Left ventricle myocardium superior (tissue), 1 donor: ENCODE measurements at regions of chr10 and their contacts with region 1.

Region 1: DNA sequence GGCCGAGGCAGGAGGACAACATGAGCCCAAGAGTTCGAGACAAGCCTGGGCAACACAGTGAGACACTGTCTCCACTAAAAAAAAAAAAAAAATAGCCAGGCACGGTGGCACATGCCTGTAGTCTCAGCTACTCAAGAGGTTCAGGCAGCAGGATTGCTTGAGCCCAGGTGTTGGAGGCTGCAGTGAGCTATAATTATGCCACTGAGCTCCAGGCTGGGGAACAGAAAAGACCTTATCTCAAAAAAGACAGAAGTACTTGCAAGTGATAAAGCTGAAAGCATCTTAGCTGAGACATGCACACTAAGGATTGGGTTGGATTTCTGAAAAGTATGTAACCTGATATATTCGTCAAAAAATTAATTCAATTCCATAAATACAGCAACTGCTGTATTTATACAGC is 68.4 kb downstream of the PPP1R3C start:
- DNase-seq: no peak
- ATAC-seq: peak; percentile 70

Region 2: DNA sequence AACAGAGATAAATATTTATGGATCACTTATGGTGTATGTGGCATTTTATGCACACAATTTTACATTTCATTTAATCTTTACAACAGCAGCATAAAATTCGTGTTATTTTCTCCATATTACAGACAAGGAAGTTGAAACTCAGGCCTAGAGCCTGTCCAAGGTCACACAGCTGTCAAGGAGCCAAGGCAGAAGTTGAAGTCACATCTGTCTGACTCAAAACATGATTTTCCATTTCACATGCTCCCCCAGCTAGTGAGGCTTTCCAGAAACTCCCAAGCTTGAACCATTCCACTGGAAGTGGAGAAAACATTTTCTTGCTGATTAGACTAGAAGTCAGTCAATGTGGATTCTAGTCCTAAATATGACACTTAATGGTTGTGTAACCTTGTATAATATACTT is 43.8 kb before region 1 on chr10:
- intact Hi-C with region 1: no loop called
- DNase-seq: peak; percentile 30
- ATAC-seq: peak; percentile 90

Region 3: GRCh38 chr10:91627344-91628102 is 63.0 kb after region 1 on chr10:
- intact Hi-C with region 1: loop called (anchors 5 kb)
- DNase-seq: no peak
- ATAC-seq: peak; percentile 38